Activated naive CD4-positive, alpha-beta T cell treated with anti-CD3 and anti-CD28 coated beads for 36 hours (primary cell): ENCODE measurements at regions of chr16 and their contacts with region 1.

Region 1: GRCh38 chr16:4734063-4734729 is at the starts of genes ANKS3 and DNAAF8:
- DNase-seq: peak; percentile 75
- H3K4me3 Mint-ChIP-seq: peak within 1 kb of the TSS; percentile 87
- H3K27ac Mint-ChIP-seq: peak within 1 kb of the TSS; percentile 46
- H3K4me1 Mint-ChIP-seq: peaks cover 16% of the 10 kb centered on the region
- H3K27me3 Mint-ChIP-seq: no peaks in the 10 kb centered on the region
- total RNA-seq, gene ANKS3: 8.2 to 11.7 TPM
- total RNA-seq, gene DNAAF8: 0.07 TPM in 1 of 2 experiments, not detected in the other

Region 2: GRCh38 chr16:4746991-4747574 is 12.9 kb after region 1 on chr16:
- CTCF ChIA-PET with region 1: no interaction called
- intact Hi-C with region 1: loop called (anchors 2 kb)
- DNase-seq: no peak
- H3K4me3 Mint-ChIP-seq: no peak overlapping the region
- H3K27ac Mint-ChIP-seq: no peak overlapping the region
- H3K4me1 Mint-ChIP-seq: peaks cover 24% of the 10 kb centered on the region
- H3K27me3 Mint-ChIP-seq: no peaks in the 10 kb centered on the region

Region 3: DNA sequence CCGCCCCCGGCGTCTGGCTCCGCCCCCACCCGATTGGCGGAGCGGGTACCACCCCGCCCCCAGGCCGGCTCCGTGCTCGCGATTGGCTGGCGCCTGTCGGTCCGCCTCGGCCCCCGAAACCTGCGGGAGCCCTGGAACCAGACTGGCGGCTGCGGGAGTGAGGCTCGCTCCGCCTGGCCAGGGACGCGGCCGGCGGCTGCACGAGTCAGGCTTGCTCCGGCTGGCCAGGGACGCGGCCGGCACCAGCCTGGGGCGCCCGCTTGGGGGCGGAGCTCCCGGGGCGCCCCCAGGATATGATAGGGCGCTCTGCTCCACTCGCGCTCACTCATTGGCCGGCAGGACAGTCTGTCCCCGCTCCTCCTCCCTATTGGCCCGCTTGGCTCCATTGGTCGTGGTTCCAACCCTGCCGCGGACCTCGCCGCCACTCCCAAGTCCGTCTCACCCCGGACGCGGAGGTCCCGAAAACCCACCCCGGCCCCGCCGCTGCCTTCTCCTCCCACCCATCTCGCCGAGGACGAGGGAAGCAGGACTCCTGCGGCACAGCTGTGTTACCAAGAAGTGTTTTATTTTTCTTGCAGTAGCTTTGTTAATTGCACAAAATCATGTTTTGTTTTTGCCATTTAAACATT is 68.6 kb after region 1 on chr16:
- CTCF ChIA-PET with region 1: no interaction called
- intact Hi-C with region 1: loop called (anchors 1 kb)
- DNase-seq: peak; percentile 87
- H3K4me3 Mint-ChIP-seq: peak overlapping the region; percentile 77
- H3K27ac Mint-ChIP-seq: no peak overlapping the region
- H3K4me1 Mint-ChIP-seq: peaks cover 9% of the 10 kb centered on the region
- H3K27me3 Mint-ChIP-seq: no peaks in the 10 kb centered on the region

Region 4: DNA sequence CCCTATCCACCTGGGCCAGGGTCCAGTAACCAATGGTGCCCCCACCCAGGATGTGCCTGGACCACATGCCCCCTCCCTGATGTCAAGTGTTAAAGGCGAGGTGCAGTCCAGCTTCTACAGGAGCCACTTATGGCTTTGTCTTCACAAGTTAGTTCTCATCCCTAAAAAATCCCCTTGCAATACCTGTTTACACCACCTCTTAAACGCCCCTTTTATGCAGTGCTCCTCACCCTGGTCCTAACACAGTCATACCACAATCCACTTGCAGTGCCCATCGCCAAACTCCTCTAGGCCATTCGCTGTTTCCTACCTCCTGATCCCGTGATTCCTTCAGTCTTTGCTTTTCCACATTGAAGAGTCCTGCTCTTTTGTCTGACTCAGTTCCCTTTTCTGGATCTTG is 105.7 kb after region 1 on chr16:
- CTCF ChIA-PET with region 1: no interaction called
- intact Hi-C with region 1: no loop called
- DNase-seq: no peak
- H3K4me3 Mint-ChIP-seq: no peak overlapping the region
- H3K27ac Mint-ChIP-seq: no peak overlapping the region
- H3K4me1 Mint-ChIP-seq: peaks cover 7% of the 10 kb centered on the region
- H3K27me3 Mint-ChIP-seq: no peaks in the 10 kb centered on the region